ENCODE measurements at regions of chr1 and their contacts with region 1.

Region 1: GRCh38 chr1:64136752-64137411 is 66.5 kb upstream of the UBE2U start:
- DNase-seq: peak; percentile 85
- H3K4me3 Mint-ChIP-seq: no peak overlapping the region
- H3K27ac Mint-ChIP-seq: peak overlapping the region; percentile 27
- H3K4me1 Mint-ChIP-seq: peaks cover 23% of the 10 kb centered on the region
- H3K27me3 Mint-ChIP-seq: no peaks in the 10 kb centered on the region
- CTCF ChIP-seq: peak; percentile 77

Region 2: DNA sequence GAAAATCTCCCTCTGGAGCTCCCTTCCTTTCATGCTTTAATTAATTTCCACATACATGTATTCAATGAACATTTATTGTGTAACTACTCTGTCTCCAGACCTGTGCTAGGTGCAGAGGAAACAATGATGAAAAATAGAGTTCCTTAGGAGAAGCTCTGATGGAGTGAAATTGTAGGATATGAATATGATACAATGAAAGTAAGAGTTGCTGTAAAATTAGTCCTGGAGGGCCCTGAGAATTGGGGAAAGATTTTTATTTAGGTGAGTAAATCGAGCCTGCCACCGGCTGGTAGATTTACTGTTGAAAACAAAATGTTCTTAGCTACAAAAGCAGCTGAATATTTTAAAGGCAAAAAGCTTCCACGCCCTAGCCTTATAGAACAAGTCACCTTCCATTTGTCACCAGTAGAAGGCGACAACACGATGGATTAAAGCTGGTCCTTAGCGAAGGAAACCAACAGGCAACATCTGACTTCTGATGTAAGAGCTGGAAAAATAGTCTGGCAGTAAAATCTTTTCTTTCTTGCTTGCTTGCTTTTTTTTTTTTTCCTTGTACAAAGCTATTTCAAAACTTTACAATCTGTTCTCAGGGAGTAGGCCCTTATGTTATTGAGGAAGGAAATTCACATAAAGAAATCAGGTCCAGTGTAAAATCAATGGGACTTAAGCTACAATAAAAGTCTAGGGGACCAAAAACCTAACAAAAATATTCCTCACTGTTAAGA is 445.0 kb before region 1 on chr1:
- CTCF ChIA-PET with region 1: interaction called, 72 read pairs
- POLR2A ChIA-PET with region 1: interaction called, 20 read pairs
- intact Hi-C with region 1: loop called (anchors 1 kb)
- DNase-seq: peak; percentile 88
- H3K4me3 Mint-ChIP-seq: no peak overlapping the region
- H3K27ac Mint-ChIP-seq: peak overlapping the region; percentile 28
- H3K4me1 Mint-ChIP-seq: peaks cover 17% of the 10 kb centered on the region
- H3K27me3 Mint-ChIP-seq: no peaks in the 10 kb centered on the region
- CTCF ChIP-seq: peak; percentile 63

Region 3: GRCh38 chr1:63917571-63918417 is 219.1 kb before region 1 on chr1:
- CTCF ChIA-PET with region 1: interaction called, 13 read pairs
- POLR2A ChIA-PET with region 1: interaction called, 3 read pairs
- intact Hi-C with region 1: loop called (anchors 1 kb)
- DNase-seq: peak; percentile 46
- H3K4me3 Mint-ChIP-seq: no peak overlapping the region
- H3K27ac Mint-ChIP-seq: no peak overlapping the region
- H3K4me1 Mint-ChIP-seq: peaks cover 16% of the 10 kb centered on the region
- H3K27me3 Mint-ChIP-seq: no peaks in the 10 kb centered on the region
- CTCF ChIP-seq: peak; percentile 12

Region 4: GRCh38 chr1:64038965-64039926 is 97.6 kb before region 1 on chr1:
- CTCF ChIA-PET with region 1: interaction called, 19 read pairs
- POLR2A ChIA-PET with region 1: interaction called, 22 read pairs
- intact Hi-C with region 1: loop called (anchors 1 kb)
- DNase-seq: peak; percentile 98
- H3K4me3 Mint-ChIP-seq: peak overlapping the region; percentile 28
- H3K27ac Mint-ChIP-seq: peak overlapping the region; percentile 82
- H3K4me1 Mint-ChIP-seq: peaks cover 64% of the 10 kb centered on the region
- H3K27me3 Mint-ChIP-seq: no peaks in the 10 kb centered on the region
- CTCF ChIP-seq: no peak

Region 5: GRCh38 chr1:64147759-64148158 is 10.9 kb after region 1 on chr1:
- CTCF ChIA-PET with region 1: interaction called, 37 read pairs
- POLR2A ChIA-PET with region 1: interaction called, 3 read pairs
- intact Hi-C with region 1: no loop called
- DNase-seq: no peak
- H3K4me3 Mint-ChIP-seq: no peak overlapping the region
- H3K27ac Mint-ChIP-seq: no peak overlapping the region
- H3K4me1 Mint-ChIP-seq: no peaks in the 10 kb centered on the region
- H3K27me3 Mint-ChIP-seq: no peaks in the 10 kb centered on the region
- CTCF ChIP-seq: no peak

Measured in MCF 10A (cell line).